HEK293T (cell line): ENCODE measurements at regions of chr1 and their contacts with region 1.

Region 1: GRCh38 chr1:26900001-26900814 is at the start of gene GPATCH3:
- DNase-seq: peak; percentile 94

Region 2: DNA sequence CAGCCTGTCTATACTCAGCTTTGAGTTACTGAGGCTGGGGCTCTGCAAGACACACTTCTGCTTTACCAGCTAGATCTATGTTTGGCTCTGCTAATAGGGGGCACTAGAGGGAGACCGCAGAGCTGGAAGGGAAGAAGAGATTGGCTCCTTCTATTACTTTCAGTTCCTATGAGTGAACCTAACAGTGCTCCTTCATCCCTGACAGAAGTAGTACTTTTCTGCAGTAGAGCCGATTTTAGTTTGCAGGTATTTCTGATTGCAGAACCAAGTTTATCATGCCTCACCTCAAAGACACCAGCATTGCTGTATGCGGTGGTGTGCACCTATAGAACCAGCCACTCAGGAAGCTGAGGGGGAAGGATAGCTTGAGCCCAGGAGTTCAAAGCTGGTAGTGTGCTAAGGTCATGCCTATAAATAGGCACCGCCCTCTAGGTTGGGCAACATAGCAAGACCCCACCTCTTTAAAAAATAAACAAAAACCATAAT is 79.4 kb before region 1 on chr1:
- CTCF ChIA-PET with region 1: no interaction called
- POLR2A ChIA-PET with region 1: no interaction called
- DNase-seq: no peak

Region 3: DNA sequence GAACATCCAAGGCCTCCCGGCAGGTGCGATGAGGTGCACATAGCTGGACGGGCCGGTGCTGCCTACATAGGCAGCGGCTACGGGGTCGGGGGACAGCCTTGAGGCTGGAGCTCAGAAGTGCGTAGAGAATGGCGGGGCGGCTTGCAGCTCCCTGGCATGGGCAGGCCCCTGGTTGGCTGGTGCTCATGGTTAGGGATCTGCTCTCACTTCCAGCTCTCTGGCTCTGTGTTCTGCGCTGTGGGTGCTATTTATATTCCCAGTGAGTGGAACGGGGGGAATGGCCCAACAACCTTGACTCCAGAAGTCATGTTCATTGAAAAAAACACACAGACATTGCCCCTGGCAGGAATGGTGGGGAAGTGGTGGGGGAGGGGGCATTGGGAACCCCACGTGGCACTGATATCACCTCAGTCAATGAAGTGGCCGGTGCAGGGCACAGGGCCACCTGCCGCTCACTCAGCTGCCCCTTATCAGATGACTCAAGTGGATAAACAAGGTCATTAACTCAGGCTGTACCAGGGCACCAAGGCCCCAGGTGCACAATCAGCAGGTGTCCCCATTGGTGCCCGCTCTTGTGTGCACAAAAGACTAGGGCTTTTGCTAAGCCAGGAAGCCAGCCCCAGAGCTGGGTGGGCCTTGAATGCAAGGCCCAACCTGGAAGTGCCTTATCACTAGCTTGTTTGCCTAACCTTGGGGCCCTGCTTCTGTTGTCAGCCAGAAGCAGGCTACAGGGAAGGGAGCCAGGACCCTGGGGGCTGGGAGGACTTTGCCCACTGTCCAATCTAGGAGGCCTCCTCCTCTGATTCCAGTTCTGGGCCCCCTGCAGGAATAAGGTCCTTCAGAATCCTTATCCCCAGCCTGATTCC is 13.8 kb after region 1 on chr1 and contains the start of gene NR0B2:
- CTCF ChIA-PET with region 1: interaction called, 4 read pairs
- POLR2A ChIA-PET with region 1: interaction called, 31 read pairs
- DNase-seq: no peak

Region 4: DNA sequence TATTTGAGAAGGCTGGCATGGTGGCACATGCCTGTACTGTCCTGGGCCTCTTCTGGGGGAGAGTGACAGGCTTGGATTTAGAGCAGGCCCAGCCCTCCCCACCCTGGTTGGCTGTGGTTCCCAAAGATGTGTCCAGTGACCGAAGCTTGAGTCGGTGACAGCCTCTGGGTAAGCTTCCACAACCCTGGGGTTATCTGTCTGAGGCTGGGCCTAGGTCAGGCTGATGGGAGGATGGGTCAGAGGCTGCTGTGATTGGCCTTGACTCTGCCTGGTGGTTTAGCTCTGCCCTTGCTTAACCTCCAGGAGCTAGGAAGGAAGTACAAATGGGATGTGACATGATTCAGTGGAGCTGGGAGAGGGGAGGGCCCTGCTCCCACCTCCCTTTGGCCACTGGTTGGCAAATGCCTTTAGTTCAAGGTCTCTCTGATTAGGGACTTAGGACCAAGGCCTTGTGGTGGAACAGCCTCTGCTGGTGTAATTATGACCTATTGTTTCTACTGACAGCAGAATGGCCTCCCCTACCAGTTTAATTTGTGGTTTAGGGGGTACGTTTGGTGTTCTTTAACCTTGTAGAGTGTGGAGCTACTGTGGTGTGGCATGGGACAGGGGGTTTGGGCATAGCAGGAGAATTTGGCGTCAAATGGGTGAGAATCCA is 37.9 kb after region 1 on chr1:
- CTCF ChIA-PET with region 1: no interaction called
- POLR2A ChIA-PET with region 1: no interaction called
- DNase-seq: no peak

Region 5: GRCh38 chr1:26986658-26987057 is 86.5 kb after region 1 on chr1:
- CTCF ChIA-PET with region 1: no interaction called
- POLR2A ChIA-PET with region 1: no interaction called
- DNase-seq: no peak

Region 6: GRCh38 chr1:27097484-27097917 is 197.3 kb after region 1 on chr1:
- CTCF ChIA-PET with region 1: no interaction called
- POLR2A ChIA-PET with region 1: no interaction called
- DNase-seq: peak; percentile 85